ENCODE measurements at regions of chr1 and their contacts with region 1.

Region 1: GRCh38 chr1:24830680-24831272 is 85.5 kb downstream of the CLIC4 start:
- DNase-seq: peak; percentile 46
- CTCF ChIP-seq: peak; percentile 59

Region 2: GRCh38 chr1:24694380-24694843 is 136.4 kb before region 1 on chr1:
- CTCF ChIA-PET with region 1: interaction called, 250 read pairs
- POLR2A ChIA-PET with region 1: no interaction called
- DNase-seq: peak; percentile 62
- CTCF ChIP-seq: no peak

Region 3: GRCh38 chr1:24699628-24700027 is 131.1 kb before region 1 on chr1:
- CTCF ChIA-PET with region 1: interaction called, 20 read pairs
- POLR2A ChIA-PET with region 1: no interaction called
- DNase-seq: no peak
- CTCF ChIP-seq: no peak

Region 4: GRCh38 chr1:24727501-24728216 is 103.1 kb before region 1 on chr1:
- CTCF ChIA-PET with region 1: interaction called, 10 read pairs
- POLR2A ChIA-PET with region 1: no interaction called
- DNase-seq: peak; percentile 71
- CTCF ChIP-seq: no peak

Region 5: DNA sequence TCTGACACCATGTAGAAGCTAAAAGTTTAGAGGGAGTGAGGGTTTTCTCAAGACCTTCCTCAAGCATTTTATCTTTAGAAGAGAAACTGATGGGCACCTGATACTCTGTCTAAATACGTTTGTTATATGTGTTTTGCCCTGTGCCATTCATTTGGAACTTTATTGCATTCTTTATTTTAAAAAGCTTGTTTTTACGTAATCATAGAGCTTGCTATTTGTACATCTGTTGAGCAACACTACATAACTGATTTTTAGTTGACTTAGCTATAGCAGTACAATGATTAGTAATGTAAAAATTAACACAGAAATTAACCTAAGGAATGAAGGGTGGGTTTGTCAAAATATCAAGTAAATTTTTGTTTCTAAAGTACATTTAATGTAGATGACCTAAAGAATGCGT is 10.8 kb after region 1 on chr1:
- CTCF ChIA-PET with region 1: interaction called, 13 read pairs
- POLR2A ChIA-PET with region 1: no interaction called
- DNase-seq: no peak
- CTCF ChIP-seq: no peak

Region 6: GRCh38 chr1:24847995-24848881 is 17.5 kb after region 1 on chr1:
- CTCF ChIA-PET with region 1: interaction called, 18 read pairs
- POLR2A ChIA-PET with region 1: no interaction called
- DNase-seq: peak; percentile 89
- CTCF ChIP-seq: peak; percentile 96

Measured in GM10248 (cell line).